PC-9 (cell line): ENCODE measurements at regions of chr16 and their contacts with region 1.

Region 1: DNA sequence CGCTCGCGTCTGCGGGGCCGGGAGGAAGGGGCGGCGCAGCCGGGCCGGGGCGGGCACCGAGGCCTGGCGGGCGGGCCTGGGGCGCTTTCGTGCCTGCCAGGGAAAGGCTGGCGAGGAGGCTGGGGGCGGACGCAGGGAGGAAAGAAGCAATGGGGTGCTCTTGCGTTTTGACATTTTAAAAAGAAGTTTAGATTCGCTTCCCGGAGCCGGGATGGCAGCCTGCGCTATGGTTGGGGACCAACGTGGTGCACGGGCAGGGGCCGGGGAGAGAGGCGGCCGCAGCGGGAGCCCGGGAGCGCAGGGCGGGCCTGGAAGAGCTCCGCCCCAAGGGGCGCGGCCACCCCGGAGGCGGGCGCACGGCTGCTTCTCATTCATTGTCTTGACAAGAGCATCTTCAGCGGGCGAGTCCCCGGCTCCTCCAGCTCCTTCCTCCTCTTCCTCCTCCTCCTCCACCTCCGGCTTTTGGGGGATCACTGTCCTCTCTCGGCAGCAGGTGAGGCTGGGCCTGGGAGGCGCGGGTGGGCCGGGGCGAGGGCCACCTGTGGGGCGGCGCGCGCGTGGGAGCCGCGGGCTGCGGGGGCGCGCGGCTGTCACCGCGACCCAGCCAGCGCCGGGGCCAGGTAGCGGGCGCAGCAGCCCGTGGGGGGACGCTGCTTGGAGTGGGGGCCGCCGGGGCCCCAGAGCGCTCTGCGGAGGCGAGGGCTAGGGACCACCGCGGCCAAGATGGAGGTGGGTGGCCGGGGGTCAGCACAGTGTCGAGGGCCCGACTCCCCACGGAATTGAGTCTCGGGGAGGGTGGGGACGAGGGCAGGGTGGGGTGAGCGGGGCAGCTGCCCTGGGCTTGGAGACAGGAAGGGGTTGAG is at the start of gene CORO1A:
- DNase-seq: peak; percentile 61 to 91
- H3K4me3 ChIP-seq: peak within 1 kb of the TSS; percentile 69
- H3K27ac ChIP-seq: peak within 1 kb of the TSS; percentile 71
- H3K4me1 ChIP-seq: peaks cover 8% of the 10 kb centered on the region
- H3K27me3 ChIP-seq: no peaks in the 10 kb centered on the region
- CTCF ChIP-seq: no peak
- total RNA-seq, gene CORO1A: 7.9 and 12.2 TPM in 2 replicates

Region 2: DNA sequence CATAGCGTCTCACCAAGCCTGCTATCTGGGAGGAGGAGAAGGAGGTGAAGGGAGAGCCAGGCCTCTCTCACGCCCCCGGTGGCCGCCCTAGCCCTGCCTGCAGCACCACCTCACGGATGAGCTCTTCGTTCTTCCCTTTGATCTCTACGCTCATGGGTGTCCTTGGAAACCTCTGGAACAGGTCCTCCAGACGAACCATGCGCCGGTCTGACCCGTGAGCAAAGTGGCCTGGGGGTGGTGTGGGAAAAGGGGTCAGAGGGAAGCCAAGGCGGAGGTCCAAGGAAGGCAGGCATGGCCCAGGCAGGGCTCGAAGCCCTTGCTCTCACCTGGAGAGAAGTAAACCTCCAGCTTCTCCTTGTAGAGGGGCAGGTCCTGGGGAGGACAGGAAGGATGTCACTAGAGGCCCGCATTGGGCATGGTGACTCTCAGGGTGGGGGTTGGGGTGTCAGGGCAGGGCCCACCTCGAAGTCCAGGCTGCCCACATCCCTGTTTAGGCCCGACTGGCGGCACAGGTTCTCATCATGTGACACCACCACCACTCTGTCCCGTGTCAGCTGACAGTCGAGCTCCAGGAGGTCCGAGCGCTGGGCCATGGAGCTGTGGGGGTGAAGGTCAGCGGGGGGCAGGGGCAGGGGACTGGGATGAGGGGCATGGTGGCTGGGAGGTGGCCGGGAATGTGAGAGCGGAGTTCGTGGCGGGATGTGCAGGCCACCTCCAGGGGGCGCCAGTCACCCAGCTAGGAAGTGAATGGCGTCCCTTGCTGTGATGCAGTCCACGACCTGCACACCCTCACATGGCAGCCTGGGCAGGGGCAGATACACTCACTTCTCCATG is 71.0 kb before region 1 on chr16:
- CTCF ChIA-PET with region 1: interaction called, 11 read pairs
- POLR2A ChIA-PET with region 1: no interaction called
- intact Hi-C with region 1: no loop called
- DNase-seq: peak; percentile 49 to 71
- H3K4me3 ChIP-seq: no peak overlapping the region
- H3K27ac ChIP-seq: no peak overlapping the region
- H3K4me1 ChIP-seq: peaks cover 55% of the 10 kb centered on the region
- H3K27me3 ChIP-seq: no peaks in the 10 kb centered on the region
- CTCF ChIP-seq: peak; percentile 67

Region 3: GRCh38 chr16:30692381-30693064 is 509.1 kb after region 1 on chr16:
- CTCF ChIA-PET with region 1: interaction called, 11 read pairs
- POLR2A ChIA-PET with region 1: no interaction called
- intact Hi-C with region 1: no loop called
- DNase-seq: no peak
- H3K4me3 ChIP-seq: no peak overlapping the region
- H3K27ac ChIP-seq: no peak overlapping the region
- H3K4me1 ChIP-seq: peaks cover 8% of the 10 kb centered on the region
- H3K27me3 ChIP-seq: no peaks in the 10 kb centered on the region
- CTCF ChIP-seq: no peak